ENCODE measurements at regions of chr13 and their contacts with region 1.

Region 1: GRCh38 chr13:27353166-27353583 is 71.2 kb upstream of the GTF3A start:
- DNase-seq: peak; percentile 88
- ATAC-seq: peak; percentile 84
- H3K4me3 ChIP-seq: peak overlapping the region; percentile 27
- H3K27ac ChIP-seq: peak overlapping the region; percentile 94
- H3K4me1 ChIP-seq: peaks cover 28% of the 10 kb centered on the region
- H3K27me3 ChIP-seq: no peaks in the 10 kb centered on the region
- CTCF ChIP-seq: no peak
- POLR2A ChIP-seq: no peak
- RAD21 ChIP-seq: peak; percentile 9; the same call in 1 of the 2 replicates

Region 2: DNA sequence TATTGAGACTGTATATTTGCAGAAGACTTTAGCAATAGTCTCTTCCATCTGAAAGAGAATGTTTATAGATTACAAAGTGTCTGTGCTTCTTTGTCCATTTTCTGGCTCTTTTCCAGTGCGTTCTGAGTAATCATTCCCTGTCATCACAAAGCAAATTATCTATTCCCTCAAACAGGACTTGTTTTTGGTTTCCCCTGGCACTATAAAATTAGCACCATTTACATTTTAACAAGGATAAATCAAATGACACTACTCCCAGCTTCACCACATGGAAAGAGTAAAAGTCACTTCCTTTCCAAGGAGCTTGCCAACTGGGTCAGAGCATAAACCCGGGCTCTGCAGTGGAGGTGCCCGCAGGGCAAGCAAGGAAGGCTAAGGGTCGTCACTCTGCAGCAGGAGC is 1389.5 kb before region 1 on chr13:
- CTCF ChIA-PET with region 1: no interaction called
- POLR2A ChIA-PET with region 1: no interaction called
- dilution Hi-C with region 1: no loop called
- in situ Hi-C with region 1: no loop called
- intact Hi-C with region 1: no loop called
- DNase-seq: no peak
- ATAC-seq: no peak
- H3K4me3 ChIP-seq: no peak overlapping the region
- H3K27ac ChIP-seq: no peak overlapping the region
- H3K4me1 ChIP-seq: no peaks in the 10 kb centered on the region
- H3K27me3 ChIP-seq: no peaks in the 10 kb centered on the region
- CTCF ChIP-seq: no peak
- POLR2A ChIP-seq: no peak
- RAD21 ChIP-seq: no peak

Region 3: GRCh38 chr13:27161980-27162379 is 191.2 kb before region 1 on chr13:
- CTCF ChIA-PET with region 1: no interaction called
- POLR2A ChIA-PET with region 1: no interaction called
- dilution Hi-C with region 1: no loop called
- in situ Hi-C with region 1: no loop called
- intact Hi-C with region 1: no loop called
- DNase-seq: peak; percentile 35
- ATAC-seq: no peak
- H3K4me3 ChIP-seq: no peak overlapping the region
- H3K27ac ChIP-seq: no peak overlapping the region
- H3K4me1 ChIP-seq: peaks cover 3% of the 10 kb centered on the region; the same call in 1 of the 2 replicates
- H3K27me3 ChIP-seq: no peaks in the 10 kb centered on the region
- CTCF ChIP-seq: no peak
- POLR2A ChIP-seq: no peak
- RAD21 ChIP-seq: no peak

Region 4: DNA sequence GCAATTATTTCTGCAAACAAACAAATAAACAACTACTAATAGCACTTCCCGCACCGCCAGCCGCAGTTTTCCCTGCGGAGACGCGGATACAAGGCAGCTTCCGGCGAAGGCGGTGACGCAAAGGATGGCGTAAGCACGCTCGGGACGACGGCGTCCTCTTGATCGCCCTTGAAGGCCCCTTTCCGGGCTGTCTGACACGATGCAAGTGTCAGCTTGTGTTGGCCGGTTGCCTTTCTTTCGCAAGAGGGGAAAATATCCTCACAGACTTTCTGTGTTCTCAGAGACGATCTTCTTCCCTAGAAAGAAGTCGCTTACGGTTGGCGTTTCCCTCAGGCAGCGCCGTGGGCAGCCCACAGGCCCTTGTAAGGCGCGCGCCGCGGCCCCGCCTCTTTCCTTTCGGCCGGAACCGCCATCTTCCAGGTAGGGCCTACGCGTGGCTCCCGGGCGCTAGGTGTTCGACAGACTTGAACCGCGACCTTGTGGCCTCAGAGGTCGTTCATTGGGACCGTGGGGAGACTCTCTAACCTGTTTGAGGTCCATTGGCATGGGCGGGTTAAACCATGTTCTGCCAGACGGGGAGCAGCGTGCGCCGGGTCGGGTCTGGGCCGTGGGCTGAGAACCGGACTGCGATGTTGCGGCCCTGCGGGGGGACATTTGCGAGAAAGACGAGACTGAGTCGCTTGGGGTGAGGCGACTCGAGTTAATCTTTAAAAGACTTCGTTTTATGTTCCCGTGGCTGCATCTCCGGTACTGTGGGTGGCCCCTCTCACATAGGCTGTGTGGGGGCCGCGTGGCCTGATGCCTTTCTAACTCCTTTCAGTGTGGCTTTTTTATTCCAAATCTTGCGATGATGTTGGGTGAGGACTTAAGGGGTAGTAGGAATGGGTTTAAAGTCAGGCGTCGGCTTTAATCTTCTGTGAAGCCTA is 101.7 kb before region 1 on chr13 and contains the start of gene RPL21:
- CTCF ChIA-PET with region 1: interaction called, 4 read pairs
- POLR2A ChIA-PET with region 1: no interaction called
- dilution Hi-C with region 1: no loop called
- in situ Hi-C with region 1: no loop called
- intact Hi-C with region 1: loop called (anchors 1 kb)
- DNase-seq: peak; percentile 99
- ATAC-seq: peak; percentile 96
- H3K4me3 ChIP-seq: peak within 1 kb of the TSS; percentile 71
- H3K27ac ChIP-seq: peak within 1 kb of the TSS; percentile 88
- H3K4me1 ChIP-seq: no peaks in the 10 kb centered on the region; the same call in 1 of the 2 replicates
- H3K27me3 ChIP-seq: no peaks in the 10 kb centered on the region
- CTCF ChIP-seq: no peak
- POLR2A ChIP-seq: peak; percentile 95
- RAD21 ChIP-seq: peak; percentile 2; the same call in 1 of the 2 replicates
- total RNA-seq, gene RPL21: 1,160 and 1,364 TPM in 2 replicates